ENCODE measurements at regions of chr17 and their contacts with region 1.

Region 1: DNA sequence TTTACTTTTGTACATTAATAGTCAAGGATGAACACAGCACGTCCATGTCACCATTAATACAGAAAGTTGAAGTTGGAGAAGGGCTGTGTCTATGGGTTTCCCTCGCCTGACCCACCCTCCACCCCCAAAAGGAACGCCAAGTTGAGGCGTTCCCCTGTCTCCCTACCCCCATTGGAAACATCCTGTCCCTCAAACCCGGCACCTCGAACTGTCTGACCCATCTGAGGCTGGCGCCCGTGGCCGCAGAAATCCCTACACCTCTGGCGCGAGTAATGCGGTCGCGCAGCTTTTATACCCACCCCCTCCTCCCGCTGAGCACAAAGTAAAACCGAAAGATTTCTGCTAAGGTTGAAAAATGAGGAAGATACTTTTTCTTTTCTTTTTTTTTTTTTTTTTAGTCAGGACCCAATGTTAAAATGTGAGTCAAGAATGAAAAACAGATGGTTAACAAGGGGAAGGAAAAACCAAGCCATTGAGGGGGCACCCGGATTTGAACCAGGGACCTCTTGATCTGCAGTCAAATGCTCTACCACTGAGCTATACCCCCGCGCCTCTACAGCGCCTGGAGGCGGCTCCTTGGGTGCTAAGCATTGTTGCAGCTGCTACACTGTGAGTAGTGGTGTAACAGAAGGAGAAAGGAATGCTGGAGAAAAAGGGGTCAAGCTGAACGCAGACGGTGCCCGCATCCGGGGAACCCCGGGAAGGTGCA is 887 bp upstream of the LASP1 start:
- DNase-seq: peak; percentile 84
- ATAC-seq: peak; percentile 53
- H3K4me3 Mint-ChIP-seq: peak overlapping the region; percentile 99
- H3K27ac Mint-ChIP-seq: peak overlapping the region; percentile 96
- H3K4me1 Mint-ChIP-seq: peaks cover 72% of the 10 kb centered on the region
- H3K27me3 Mint-ChIP-seq: peaks cover 2% of the 10 kb centered on the region
- CTCF ChIP-seq: no peak

Region 2: DNA sequence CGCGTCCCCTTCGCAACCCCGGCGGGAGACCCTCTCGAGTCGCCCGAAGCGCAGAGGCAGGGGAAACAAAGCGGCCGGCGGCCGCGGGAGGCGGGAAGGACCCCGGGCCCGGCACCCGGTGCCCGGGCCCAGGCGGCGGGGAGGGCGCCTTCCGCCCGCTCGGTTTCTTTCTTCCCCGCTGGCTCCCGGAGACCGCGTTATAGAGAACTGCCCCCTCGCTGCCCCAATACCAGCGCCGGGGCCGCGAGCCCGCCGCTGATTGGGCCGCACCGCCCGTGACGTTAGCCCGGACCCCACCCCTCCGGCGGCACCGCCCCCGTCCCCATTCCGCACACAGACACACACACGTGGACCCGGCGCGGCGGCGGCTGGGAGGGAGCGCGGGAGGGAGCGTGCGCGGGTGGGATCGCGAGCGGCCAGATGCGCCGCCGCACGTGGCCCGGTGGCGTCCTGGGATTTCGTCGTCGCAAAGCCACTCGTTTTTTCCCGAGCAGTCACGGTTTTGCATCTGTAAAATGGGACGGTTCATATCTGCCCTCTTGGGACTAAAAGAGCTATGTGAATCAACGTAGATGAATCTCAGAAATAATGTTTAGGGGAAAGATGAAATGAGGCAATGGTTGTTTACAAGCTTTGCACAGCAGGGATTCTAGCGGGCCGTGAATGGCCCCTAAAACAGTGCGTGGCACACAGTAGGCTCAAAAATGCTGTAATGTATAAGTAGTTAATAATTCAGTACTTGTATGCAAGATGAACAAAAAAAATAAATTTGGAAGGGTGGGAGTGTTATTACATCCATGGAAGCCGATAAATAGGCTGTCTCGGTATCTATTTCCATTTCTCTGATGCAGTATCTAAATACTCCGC is 194.0 kb before region 1 on chr17 and contains the start of gene EPOP:
- CTCF ChIA-PET with region 1: no interaction called
- POLR2A ChIA-PET with region 1: no interaction called
- intact Hi-C with region 1: loop called (anchors 10 kb)
- DNase-seq: peak; percentile 79
- ATAC-seq: peak; percentile 88
- H3K4me3 Mint-ChIP-seq: peak within 1 kb of the TSS; percentile 70
- H3K27ac Mint-ChIP-seq: no peak within 1 kb of the TSS
- H3K4me1 Mint-ChIP-seq: peaks cover 32% of the 10 kb centered on the region
- H3K27me3 Mint-ChIP-seq: peaks cover 29% of the 10 kb centered on the region
- CTCF ChIP-seq: no peak
- total RNA-seq, gene EPOP: 2.8 and 3.0 TPM in 2 replicates

Region 3: GRCh38 chr17:38799378-38800236 is 69.4 kb before region 1 on chr17 and contains the start of gene PIP4K2B:
- CTCF ChIA-PET with region 1: no interaction called
- POLR2A ChIA-PET with region 1: interaction called, 14 read pairs
- intact Hi-C with region 1: loop called (anchors 1 kb)
- DNase-seq: peak; percentile 86
- ATAC-seq: peak; percentile 85
- H3K4me3 Mint-ChIP-seq: peak within 1 kb of the TSS; percentile 88
- H3K27ac Mint-ChIP-seq: peak within 1 kb of the TSS; percentile 87
- H3K4me1 Mint-ChIP-seq: peaks cover 32% of the 10 kb centered on the region
- H3K27me3 Mint-ChIP-seq: no peaks in the 10 kb centered on the region
- CTCF ChIP-seq: no peak
- total RNA-seq, gene PIP4K2B: 32.1 and 33.0 TPM in 2 replicates

Region 4: GRCh38 chr17:38879878-38880682 is 11.1 kb after region 1 on chr17:
- CTCF ChIA-PET with region 1: interaction called, 3 read pairs
- POLR2A ChIA-PET with region 1: interaction called, 60 read pairs
- intact Hi-C with region 1: loop called (anchors 1 kb)
- DNase-seq: no peak
- ATAC-seq: no peak
- H3K4me3 Mint-ChIP-seq: no peak overlapping the region
- H3K27ac Mint-ChIP-seq: peak overlapping the region; percentile 30
- H3K4me1 Mint-ChIP-seq: peaks cover 86% of the 10 kb centered on the region
- H3K27me3 Mint-ChIP-seq: no peaks in the 10 kb centered on the region
- CTCF ChIP-seq: no peak

Region 5: GRCh38 chr17:38922538-38923297 is 53.7 kb after region 1 on chr17:
- CTCF ChIA-PET with region 1: interaction called, 9 read pairs
- POLR2A ChIA-PET with region 1: interaction called, 40 read pairs
- intact Hi-C with region 1: loop called (anchors 2 kb)
- DNase-seq: no peak
- ATAC-seq: no peak
- H3K4me3 Mint-ChIP-seq: no peak overlapping the region
- H3K27ac Mint-ChIP-seq: peak overlapping the region; percentile 55
- H3K4me1 Mint-ChIP-seq: peaks cover 21% of the 10 kb centered on the region
- H3K27me3 Mint-ChIP-seq: no peaks in the 10 kb centered on the region
- CTCF ChIP-seq: no peak

Region 6: GRCh38 chr17:39057701-39058206 is 188.8 kb after region 1 on chr17:
- CTCF ChIA-PET with region 1: no interaction called
- POLR2A ChIA-PET with region 1: interaction called, 10 read pairs
- intact Hi-C with region 1: no loop called
- DNase-seq: no peak
- ATAC-seq: no peak
- H3K4me3 Mint-ChIP-seq: peak overlapping the region; percentile 87
- H3K27ac Mint-ChIP-seq: no peak overlapping the region
- H3K4me1 Mint-ChIP-seq: peaks cover 9% of the 10 kb centered on the region
- H3K27me3 Mint-ChIP-seq: peaks cover 6% of the 10 kb centered on the region
- CTCF ChIP-seq: no peak

Measured in activated B cell treated with CpG ODN at 0.5 μM for 24 hours (primary cell).